PC-9 (cell line): ENCODE measurements at regions of chr10 and their contacts with region 1.

Region 1: GRCh38 chr10:70146489-70147258 is at the start of gene TYSND1:
- DNase-seq: peak; percentile 98 to 99
- H3K4me3 ChIP-seq: peak within 1 kb of the TSS; percentile 84
- H3K27ac ChIP-seq: peak within 1 kb of the TSS; percentile 70
- H3K4me1 ChIP-seq: peaks cover 15% of the 10 kb centered on the region
- H3K27me3 ChIP-seq: no peaks in the 10 kb centered on the region
- CTCF ChIP-seq: peak; percentile 81
- total RNA-seq, gene TYSND1: 28.0 and 33.5 TPM in 2 replicates

Region 2: GRCh38 chr10:70115948-70116682 is 30.6 kb before region 1 on chr10:
- CTCF ChIA-PET with region 1: interaction called, 16 read pairs
- POLR2A ChIA-PET with region 1: interaction called, 4 read pairs
- intact Hi-C with region 1: no loop called
- DNase-seq: peak in 1 of 2 experiments; percentile 54
- H3K4me3 ChIP-seq: no peak overlapping the region
- H3K27ac ChIP-seq: no peak overlapping the region
- H3K4me1 ChIP-seq: no peaks in the 10 kb centered on the region
- H3K27me3 ChIP-seq: no peaks in the 10 kb centered on the region
- CTCF ChIP-seq: peak; percentile 98

Region 3: GRCh38 chr10:70132098-70133029 is 14.3 kb before region 1 on chr10 and contains the start of gene AIFM2:
- CTCF ChIA-PET with region 1: interaction called, 13 read pairs
- POLR2A ChIA-PET with region 1: interaction called, 7 read pairs
- intact Hi-C with region 1: loop called (anchors 1 kb)
- DNase-seq: peak; percentile 78 to 90
- H3K4me3 ChIP-seq: peak within 1 kb of the TSS; percentile 100
- H3K27ac ChIP-seq: peak within 1 kb of the TSS; percentile 90
- H3K4me1 ChIP-seq: peaks cover 20% of the 10 kb centered on the region
- H3K27me3 ChIP-seq: no peaks in the 10 kb centered on the region
- CTCF ChIP-seq: peak; percentile 19; the same call in 1 of the 2 replicates
- total RNA-seq, gene AIFM2: 40.3 and 47.0 TPM in 2 replicates

Region 4: DNA sequence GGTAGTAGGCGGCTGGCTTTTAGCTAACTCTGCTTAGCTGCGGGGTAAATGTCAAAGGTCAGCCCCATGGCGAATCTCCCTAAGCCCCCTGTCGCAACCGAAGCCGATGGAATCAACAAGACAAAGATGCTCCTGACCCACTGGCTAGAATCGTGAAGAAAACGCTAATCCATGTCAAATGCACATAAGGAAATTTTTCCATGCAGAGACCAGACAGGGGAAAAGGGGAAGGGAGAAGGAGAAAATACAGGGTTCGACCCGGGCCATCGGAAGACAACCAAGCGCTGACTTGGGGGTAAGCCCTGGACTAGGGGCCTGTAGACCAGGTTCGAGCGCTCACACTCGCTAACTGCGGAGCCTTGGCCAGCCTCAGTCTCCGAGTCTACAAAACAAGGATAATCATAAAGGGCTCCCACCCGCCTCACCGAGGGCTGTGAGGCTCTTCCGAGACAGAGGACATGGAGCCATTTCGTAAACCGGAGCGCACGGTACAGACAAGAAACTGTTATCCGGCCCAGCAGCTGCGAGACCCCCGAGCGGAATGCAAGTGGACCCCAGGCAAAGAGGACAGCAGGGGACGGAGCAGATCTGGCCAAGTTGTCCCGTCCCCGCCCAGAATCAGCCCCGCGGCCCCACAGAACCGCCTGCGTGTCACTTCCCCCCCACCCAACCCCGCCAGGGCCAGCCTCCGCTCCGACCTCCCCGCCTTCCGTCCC is 23.1 kb after region 1 on chr10:
- CTCF ChIA-PET with region 1: interaction called, 15 read pairs
- POLR2A ChIA-PET with region 1: interaction called, 32 read pairs
- intact Hi-C with region 1: loop called (anchors 1 kb)
- DNase-seq: no peak
- H3K4me3 ChIP-seq: peak overlapping the region; percentile 98
- H3K27ac ChIP-seq: 0 out of 2 replicates have a peak overlapping the region, but pooled peaks have one; percentile 68
- H3K4me1 ChIP-seq: peaks cover 36% of the 10 kb centered on the region
- H3K27me3 ChIP-seq: no peaks in the 10 kb centered on the region
- CTCF ChIP-seq: no peak

Region 5: DNA sequence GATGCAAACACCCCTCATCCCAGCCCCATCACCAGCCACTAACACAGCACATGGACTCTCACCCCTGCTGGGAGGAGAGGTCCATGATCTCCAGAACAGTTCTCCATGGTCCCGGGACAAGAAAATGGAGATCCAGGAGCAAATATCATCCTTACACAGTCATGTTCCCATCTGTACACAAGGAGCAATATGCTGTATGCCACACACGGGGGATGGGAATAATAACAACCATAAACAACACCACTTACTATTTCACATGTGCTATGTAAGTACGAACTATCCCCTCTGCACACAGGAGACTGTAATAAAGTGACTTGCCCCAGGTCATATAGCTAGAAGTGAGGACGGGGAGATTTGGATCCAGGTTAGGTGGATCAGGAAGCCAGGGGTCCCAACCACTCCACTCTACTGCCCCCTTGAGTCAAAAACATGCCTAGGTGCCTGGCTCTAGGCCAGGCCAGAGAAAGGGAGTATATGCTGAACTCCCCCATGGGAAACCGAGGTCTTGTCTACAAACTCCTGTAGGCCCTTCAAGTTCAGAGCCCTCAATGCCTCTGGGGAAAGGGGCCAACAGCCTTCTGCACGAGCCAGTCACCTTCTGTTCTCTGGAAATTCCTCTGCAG is 201.7 kb after region 1 on chr10:
- CTCF ChIA-PET with region 1: no interaction called
- POLR2A ChIA-PET with region 1: interaction called, 11 read pairs
- intact Hi-C with region 1: no loop called
- DNase-seq: peak in 1 of 2 experiments; percentile 42
- H3K4me3 ChIP-seq: no peak overlapping the region
- H3K27ac ChIP-seq: no peak overlapping the region
- H3K4me1 ChIP-seq: peaks cover 15% of the 10 kb centered on the region
- H3K27me3 ChIP-seq: no peaks in the 10 kb centered on the region
- CTCF ChIP-seq: peak; percentile 67

Region 6: GRCh38 chr10:70513848-70514309 is 367.2 kb after region 1 on chr10:
- CTCF ChIA-PET with region 1: no interaction called
- POLR2A ChIA-PET with region 1: no interaction called
- intact Hi-C with region 1: no loop called
- DNase-seq: no peak
- H3K4me3 ChIP-seq: no peak overlapping the region
- H3K27ac ChIP-seq: no peak overlapping the region
- H3K4me1 ChIP-seq: peaks cover 8% of the 10 kb centered on the region
- H3K27me3 ChIP-seq: no peaks in the 10 kb centered on the region
- CTCF ChIP-seq: no peak